CD8-positive, alpha-beta T cell (primary cell): ENCODE measurements at regions of chr5 and their contacts with region 1.

Region 1: GRCh38 chr5:162377895-162378294 is 310.3 kb downstream of the GABRG2 start:
- DNase-seq: no peak
- ATAC-seq: no peak
- H3K4me3 ChIP-seq: no peak overlapping the region
- H3K4me3 Mint-ChIP-seq: no peak overlapping the region
- H3K27ac ChIP-seq: no peak overlapping the region
- H3K27ac Mint-ChIP-seq: no peak overlapping the region
- H3K4me1 ChIP-seq: no peaks in the 10 kb centered on the region
- H3K4me1 Mint-ChIP-seq: no peaks in the 10 kb centered on the region
- H3K27me3 ChIP-seq: no peaks in the 10 kb centered on the region
- H3K27me3 Mint-ChIP-seq: no peaks in the 10 kb centered on the region
- CTCF ChIP-seq: no peak

Region 2: GRCh38 chr5:163821142-163821541 is 1443.2 kb after region 1 on chr5:
- CTCF ChIA-PET with region 1: no interaction called
- POLR2A ChIA-PET with region 1: no interaction called
- intact Hi-C with region 1: loop called in 1 of 2 experiments (anchors 5 kb)
- DNase-seq: no peak
- ATAC-seq: no peak
- H3K4me3 ChIP-seq: no peak overlapping the region
- H3K4me3 Mint-ChIP-seq: no peak overlapping the region
- H3K27ac ChIP-seq: no peak overlapping the region
- H3K27ac Mint-ChIP-seq: no peak overlapping the region
- H3K4me1 ChIP-seq: no peaks in the 10 kb centered on the region
- H3K4me1 Mint-ChIP-seq: no peaks in the 10 kb centered on the region
- H3K27me3 ChIP-seq: no peaks in the 10 kb centered on the region
- H3K27me3 Mint-ChIP-seq: no peaks in the 10 kb centered on the region
- CTCF ChIP-seq: no peak